WTC11 (cell line): ENCODE measurements at regions of chr11 and their contacts with region 1.

Region 1: DNA sequence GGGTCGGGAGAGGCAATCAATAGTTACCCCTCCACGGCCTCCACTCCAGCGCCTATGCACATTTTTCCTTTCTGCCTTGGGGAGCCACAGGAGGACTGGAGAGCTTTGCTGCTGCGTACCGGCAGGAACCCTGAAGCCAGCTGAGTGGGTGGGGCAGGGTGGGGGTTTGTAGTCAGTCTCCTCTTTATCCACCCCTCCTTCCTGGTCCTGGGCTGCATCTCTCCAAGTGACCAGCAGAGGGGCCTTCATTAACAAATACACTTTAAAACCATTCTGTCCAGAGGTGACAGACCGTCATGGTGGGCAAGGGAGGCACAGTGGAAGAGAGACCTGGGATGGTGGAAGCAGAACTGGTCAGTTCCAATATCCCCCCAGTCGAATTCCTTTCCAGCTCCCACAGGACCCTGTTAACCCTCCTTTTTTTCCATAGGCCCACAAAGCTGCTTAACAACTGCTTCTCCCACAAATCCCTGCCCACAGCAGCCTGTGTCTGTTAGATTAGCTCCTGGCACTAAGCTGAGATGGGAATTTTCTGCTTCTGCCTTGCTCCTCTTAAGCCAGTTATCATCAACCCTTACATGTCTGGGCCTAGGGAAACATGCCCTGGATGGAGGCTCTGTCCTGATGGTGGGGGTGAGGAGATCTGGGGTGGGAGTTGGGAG is 3.9 kb upstream of the ABCG4 start:
- DNase-seq: peak; percentile 84
- ATAC-seq: peak; percentile 83
- H3K4me3 Mint-ChIP-seq: no peak overlapping the region
- H3K27ac Mint-ChIP-seq: no peak overlapping the region
- H3K4me1 Mint-ChIP-seq: peaks cover 23% of the 10 kb centered on the region
- H3K27me3 Mint-ChIP-seq: peaks cover 43% of the 10 kb centered on the region
- CTCF ChIP-seq: peak; percentile 52

Region 2: GRCh38 chr11:119101759-119102423 is 43.1 kb before region 1 on chr11 and contains the start of gene DPAGT1:
- CTCF ChIA-PET with region 1: interaction called, 12 read pairs
- POLR2A ChIA-PET with region 1: no interaction called
- DNase-seq: peak; percentile 88
- ATAC-seq: peak; percentile 83
- H3K4me3 Mint-ChIP-seq: peak within 1 kb of the TSS; percentile 92
- H3K27ac Mint-ChIP-seq: peak within 1 kb of the TSS; percentile 100
- H3K4me1 Mint-ChIP-seq: peaks cover 33% of the 10 kb centered on the region
- H3K27me3 Mint-ChIP-seq: no peaks in the 10 kb centered on the region; the same call in 1 of the 2 replicates
- CTCF ChIP-seq: no peak
- total RNA-seq, gene DPAGT1: 59.6 to 64.6 TPM (median 63.5 TPM) in 3 replicates

Region 3: DNA sequence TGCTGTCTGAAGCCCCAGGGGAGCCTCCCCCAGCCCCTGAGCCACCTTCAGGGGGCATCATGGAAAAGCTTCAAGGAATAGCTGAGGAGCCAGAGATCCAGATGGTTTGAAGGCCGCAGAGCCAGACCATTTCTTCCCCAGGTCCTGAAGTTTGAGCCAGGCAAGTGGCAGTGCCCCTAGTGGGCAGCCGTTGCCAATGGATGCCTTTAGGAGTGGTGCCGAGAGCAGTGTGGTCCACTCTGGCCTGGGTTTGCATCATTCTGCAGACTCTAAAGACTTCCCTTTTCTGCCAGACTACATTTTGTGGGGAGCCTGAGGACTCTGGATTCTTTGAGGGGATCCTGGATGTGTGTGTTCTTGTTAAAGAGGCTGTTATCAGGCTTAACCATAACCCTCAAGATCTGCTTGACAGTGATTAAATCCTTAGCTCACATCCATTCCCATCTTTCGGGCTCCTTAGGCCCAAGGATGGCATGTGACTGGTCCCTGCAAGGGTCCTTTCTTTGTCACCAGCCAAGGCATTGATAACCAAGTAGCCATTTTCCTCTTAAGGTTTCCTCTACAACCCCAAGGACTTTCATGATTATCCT is 10.5 kb before region 1 on chr11:
- CTCF ChIA-PET with region 1: interaction called, 31 read pairs
- POLR2A ChIA-PET with region 1: no interaction called
- DNase-seq: peak; percentile 46
- ATAC-seq: peak; percentile 89
- H3K4me3 Mint-ChIP-seq: no peak overlapping the region
- H3K27ac Mint-ChIP-seq: no peak overlapping the region
- H3K4me1 Mint-ChIP-seq: no peaks in the 10 kb centered on the region
- H3K27me3 Mint-ChIP-seq: peaks cover 4% of the 10 kb centered on the region; the same call in 1 of the 2 replicates
- CTCF ChIP-seq: no peak; the same call in 1 of the 2 replicates

Region 4: DNA sequence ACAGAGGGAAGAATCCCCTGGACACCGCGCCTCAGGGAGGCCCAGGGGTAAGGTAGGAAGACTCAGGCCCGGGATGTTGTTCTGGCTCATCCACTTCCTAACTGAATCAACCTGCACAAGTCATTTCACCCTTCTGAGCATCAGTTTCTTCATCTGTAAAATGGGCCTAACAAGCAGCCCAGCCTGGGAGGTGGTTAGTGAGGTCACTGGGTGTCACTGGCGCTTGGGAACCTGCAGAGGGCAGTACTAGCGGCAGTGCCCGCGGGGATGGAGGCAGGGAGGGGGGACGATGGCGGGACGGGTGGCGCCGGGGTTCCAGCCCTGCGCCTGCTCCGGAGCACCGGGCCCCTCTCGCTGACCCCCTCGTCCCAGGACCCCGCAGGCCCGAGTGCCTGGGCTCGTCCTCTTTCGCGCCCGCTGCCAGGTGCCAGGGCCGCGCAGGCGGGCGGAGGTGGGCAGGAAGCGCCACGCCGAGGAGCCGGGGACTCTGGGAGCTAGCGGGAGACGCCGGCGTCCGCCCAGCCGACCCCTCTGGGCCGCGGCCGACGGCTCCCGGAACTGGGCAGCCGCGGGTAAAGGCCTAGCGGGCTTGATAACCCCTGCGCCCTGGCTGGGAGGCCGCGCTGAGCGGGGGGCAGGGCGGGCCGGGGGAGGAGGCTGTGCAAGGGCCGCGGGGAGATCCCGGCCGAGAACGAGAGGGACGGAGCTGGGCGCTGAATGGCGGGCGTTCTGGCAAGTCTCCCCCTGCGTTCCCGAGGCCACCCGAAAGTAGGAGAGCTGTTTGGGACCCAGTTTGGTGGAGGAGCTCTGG is 23.7 kb after region 1 on chr11 and contains the start of gene NLRX1:
- CTCF ChIA-PET with region 1: interaction called, 19 read pairs
- POLR2A ChIA-PET with region 1: no interaction called
- DNase-seq: peak; percentile 83
- ATAC-seq: peak; percentile 72
- H3K4me3 Mint-ChIP-seq: peak within 1 kb of the TSS; percentile 83
- H3K27ac Mint-ChIP-seq: peak within 1 kb of the TSS; percentile 95
- H3K4me1 Mint-ChIP-seq: peaks cover 26% of the 10 kb centered on the region
- H3K27me3 Mint-ChIP-seq: no peaks in the 10 kb centered on the region
- CTCF ChIP-seq: peak; percentile 43; the same call in 1 of the 2 replicates
- total RNA-seq, gene NLRX1: 19.9 to 23.2 TPM (median 20.8 TPM) in 3 replicates

Region 5: DNA sequence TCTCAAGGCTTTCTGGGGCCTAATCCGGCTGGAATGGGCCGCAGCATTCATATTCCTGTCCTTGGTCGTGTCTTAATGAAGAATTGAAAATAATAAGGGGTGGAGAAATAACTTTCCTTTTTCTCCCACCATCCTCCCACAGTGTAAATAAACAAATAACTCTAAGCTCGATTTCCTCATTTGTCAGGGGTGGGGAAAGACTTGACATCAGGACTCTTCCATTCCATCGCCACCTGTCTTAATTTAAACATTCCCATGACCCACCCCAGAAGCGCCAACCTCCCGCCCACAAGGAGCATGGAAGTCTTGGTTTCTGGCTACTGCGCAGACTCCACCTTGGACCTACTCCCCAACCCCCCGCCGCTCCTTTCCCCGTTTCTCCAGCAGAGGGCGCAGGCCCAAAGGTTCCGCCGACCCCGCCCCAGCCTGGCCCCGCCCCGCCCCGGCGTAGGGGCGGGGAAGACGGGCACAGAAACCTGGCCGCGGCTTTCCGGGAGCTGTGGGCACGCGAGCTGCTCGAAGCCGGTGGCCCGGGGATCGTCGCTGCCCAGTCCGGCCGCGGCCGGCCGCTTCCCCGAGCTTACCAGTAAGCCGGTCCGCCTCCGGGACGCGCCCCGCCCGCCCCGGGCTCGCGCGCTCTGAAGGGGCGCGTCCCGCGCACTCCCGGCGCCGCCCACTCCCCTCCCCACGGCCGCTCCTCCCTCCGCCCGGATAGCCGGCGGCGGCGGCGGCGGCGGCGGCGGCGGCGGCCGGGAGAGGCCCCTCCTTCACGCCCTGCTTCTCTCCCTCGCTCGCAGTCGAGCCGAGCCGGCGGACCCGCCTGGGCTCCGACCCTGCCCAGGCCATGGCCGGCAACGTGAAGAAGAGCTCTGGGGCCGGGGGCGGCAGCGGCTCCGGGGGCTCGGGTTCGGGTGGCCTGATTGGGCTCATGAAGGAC is 60.9 kb after region 1 on chr11 and contains the start of gene CBL:
- CTCF ChIA-PET with region 1: interaction called, 12 read pairs
- POLR2A ChIA-PET with region 1: no interaction called
- DNase-seq: peak; percentile 98
- ATAC-seq: peak; percentile 79
- H3K4me3 Mint-ChIP-seq: peak within 1 kb of the TSS; percentile 95
- H3K27ac Mint-ChIP-seq: peak within 1 kb of the TSS; percentile 96
- H3K4me1 Mint-ChIP-seq: peaks cover 39% of the 10 kb centered on the region
- H3K27me3 Mint-ChIP-seq: no peaks in the 10 kb centered on the region
- CTCF ChIP-seq: peak; percentile 78
- total RNA-seq, gene CBL: 45.6 to 47.9 TPM (median 46.7 TPM) in 3 replicates